ENCODE measurements at regions of chrX and their contacts with region 1.

Region 1: DNA sequence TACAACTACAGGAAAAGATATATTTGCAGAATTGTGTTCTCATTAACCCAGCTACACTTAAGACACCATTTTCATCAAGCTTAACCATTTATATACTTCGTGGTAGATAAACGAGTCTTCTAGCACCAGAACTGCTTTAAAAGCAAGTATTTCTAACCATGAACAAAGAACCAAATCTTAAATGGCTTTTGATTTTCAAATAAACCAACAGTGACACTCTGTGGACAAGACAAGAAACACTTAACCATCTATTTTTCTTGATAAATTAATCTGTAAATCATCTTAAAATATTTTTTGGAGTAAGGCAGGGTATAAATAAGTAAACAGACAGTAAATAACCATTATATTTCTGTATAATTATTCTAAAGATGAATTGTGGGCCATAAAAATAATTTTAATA is 10.2 kb downstream of the BEND2 start:
- DNase-seq: no peak

Region 2: GRCh38 chrX:17944833-17945497 is 265.5 kb before region 1 on chrX:
- CTCF ChIA-PET with region 1: interaction called, 13 read pairs
- POLR2A ChIA-PET with region 1: no interaction called
- DNase-seq: peak; percentile 37

Region 3: DNA sequence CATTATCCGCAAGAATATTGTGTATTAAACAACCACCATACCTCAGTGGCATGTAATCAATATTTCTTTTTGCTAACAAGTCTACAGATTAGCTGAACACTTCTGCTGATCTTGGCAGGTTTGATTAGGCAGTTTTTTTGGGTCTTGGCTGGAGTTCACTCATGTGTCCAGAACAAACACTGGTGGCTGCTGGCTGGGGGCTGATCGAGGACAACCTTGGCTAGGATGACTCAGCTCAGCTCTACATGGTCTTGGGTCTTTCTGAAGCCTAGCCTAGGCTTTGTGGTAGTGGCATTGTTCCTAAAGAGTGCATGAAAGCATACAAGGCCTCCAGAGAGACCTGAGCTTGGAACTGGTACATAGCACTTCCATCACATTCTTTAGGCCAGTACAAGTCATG is 538.0 kb after region 1 on chrX:
- CTCF ChIA-PET with region 1: no interaction called
- POLR2A ChIA-PET with region 1: no interaction called
- DNase-seq: no peak

Measured in HEK293T (cell line).